ENCODE measurements at regions of chr1 and their contacts with region 1.

Region 1: DNA sequence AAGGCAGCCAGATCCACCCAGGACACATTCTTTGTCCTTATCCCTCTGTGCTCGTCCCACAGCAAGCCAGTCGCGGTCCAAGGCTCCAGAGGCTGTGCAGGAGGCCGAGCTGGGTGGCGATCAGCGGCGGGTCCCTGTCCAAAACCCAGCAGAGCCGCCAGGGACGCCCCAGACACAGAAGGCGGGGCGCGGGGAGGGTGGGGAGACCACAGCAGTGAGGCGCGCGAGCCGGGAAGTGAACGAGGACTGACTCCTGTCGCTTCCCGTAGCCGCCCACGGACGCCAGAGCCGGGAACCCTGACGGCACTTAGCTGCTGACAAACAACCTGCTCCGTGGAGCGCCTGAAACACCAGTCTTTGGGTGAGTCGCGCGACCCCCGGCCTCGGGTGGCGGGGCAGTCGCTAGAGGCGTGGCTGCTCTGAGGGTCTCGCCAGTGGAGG is at the start of gene LGALS8:
- DNase-seq: peak; percentile 76 to 92
- ATAC-seq: peak; percentile 79 to 85 (median 82)
- H3K4me3 ChIP-seq: peak within 1 kb of the TSS; percentile 97
- H3K4me3 Mint-ChIP-seq: peak within 1 kb of the TSS; percentile 99
- H3K27ac ChIP-seq: peak within 1 kb of the TSS; percentile 76
- H3K27ac Mint-ChIP-seq: peak within 1 kb of the TSS; percentile 97 to 98
- H3K4me1 ChIP-seq: peaks cover 11% of the 10 kb centered on the region
- H3K4me1 Mint-ChIP-seq: peaks cover 9 to 21% of the 10 kb centered on the region in 2 donors
- H3K27me3 ChIP-seq: no peaks in the 10 kb centered on the region
- H3K27me3 Mint-ChIP-seq: peaks cover 0 to 9% of the 10 kb centered on the region in 2 donors
- CTCF ChIP-seq: no peak
- total RNA-seq, gene LGALS8: 90.5 to 129 (median 114) TPM

Region 2: GRCh38 chr1:236416165-236416564 is 107.6 kb before region 1 on chr1:
- intact Hi-C with region 1: loop called (anchors 2 kb)
- DNase-seq: peak; percentile 53 to 89
- ATAC-seq: peak; percentile 91 to 93 (median 91)
- H3K4me3 ChIP-seq: peak overlapping the region; percentile 23
- H3K4me3 Mint-ChIP-seq: peak overlapping the region; percentile 86
- H3K27ac ChIP-seq: peak overlapping the region; percentile 98
- H3K27ac Mint-ChIP-seq: peak overlapping the region; percentile 93 to 99
- H3K4me1 ChIP-seq: peaks cover 26% of the 10 kb centered on the region
- H3K4me1 Mint-ChIP-seq: peaks cover 17 to 28% of the 10 kb centered on the region in 2 donors
- H3K27me3 ChIP-seq: no peaks in the 10 kb centered on the region
- H3K27me3 Mint-ChIP-seq: no peaks in the 10 kb centered on the region
- CTCF ChIP-seq: no peak

Region 3: GRCh38 chr1:236507022-236507700 is 16.6 kb before region 1 on chr1:
- intact Hi-C with region 1: no loop called
- DNase-seq: no peak
- ATAC-seq: no peak
- H3K4me3 ChIP-seq: no peak overlapping the region
- H3K4me3 Mint-ChIP-seq: no peak overlapping the region
- H3K27ac ChIP-seq: no peak overlapping the region
- H3K27ac Mint-ChIP-seq: no peak overlapping the region
- H3K4me1 ChIP-seq: peaks cover 8% of the 10 kb centered on the region
- H3K4me1 Mint-ChIP-seq: peaks cover 7% of the 10 kb centered on the region in 2 donors
- H3K27me3 ChIP-seq: no peaks in the 10 kb centered on the region
- H3K27me3 Mint-ChIP-seq: peaks cover 2 to 8% of the 10 kb centered on the region in 2 donors
- CTCF ChIP-seq: no peak

Measured in natural killer cell (primary cell).